ENCODE measurements at regions of chr1 and their contacts with region 1.

Region 1: DNA sequence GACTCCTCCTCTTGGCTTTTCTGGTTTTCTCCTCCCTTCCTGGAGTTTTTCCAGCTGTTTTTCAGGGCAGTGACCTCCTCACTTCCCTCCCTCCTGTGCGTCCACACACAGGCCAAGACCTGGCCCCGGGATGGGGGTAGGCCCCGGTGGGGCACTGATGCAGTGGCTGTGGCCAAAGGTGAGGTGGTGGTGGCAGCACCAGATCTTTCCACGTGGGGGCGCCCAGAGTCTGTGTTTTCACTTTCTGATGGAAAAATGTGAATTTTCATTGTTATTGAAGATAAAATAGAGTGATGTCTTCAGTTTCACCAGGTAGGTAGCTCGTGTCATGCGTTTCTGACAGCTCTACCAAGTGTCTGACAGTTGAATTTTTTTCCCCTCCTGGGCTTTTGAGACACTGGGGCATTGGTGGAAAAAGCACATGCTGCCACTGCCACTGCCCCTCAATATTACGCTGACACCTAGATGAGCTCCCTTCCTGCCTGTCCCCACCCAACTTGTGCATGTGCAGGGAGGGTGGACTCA is 39.9 kb upstream of the MAGOH start:
- DNase-seq: peak; percentile 49
- ATAC-seq: peak; percentile 50 to 55

Region 2: DNA sequence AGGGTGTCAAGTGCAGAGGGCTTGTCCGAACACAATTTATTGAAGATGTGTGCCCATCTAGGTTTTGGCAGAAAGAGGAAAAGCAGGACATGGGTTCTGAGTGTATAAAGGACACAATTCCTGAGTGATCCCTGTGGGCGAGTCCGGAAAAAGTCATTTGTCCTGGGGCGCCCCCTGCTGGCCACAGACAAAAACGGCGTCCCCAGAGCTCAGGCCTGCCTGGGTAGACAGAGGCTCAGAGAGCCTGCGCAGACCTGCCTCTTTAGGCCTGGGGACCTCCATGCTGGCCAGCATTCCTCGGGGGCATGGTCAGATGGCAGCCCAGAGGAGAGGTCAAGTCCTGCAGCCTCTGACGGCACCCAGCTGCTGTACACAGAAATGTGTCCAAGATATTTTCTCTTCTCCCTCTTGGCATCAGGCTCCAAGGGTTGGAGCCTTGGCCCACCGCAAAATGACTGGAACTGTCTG is 115.1 kb after region 1 on chr1:
- intact Hi-C with region 1: loop called (anchors 1 to 2 kb)
- DNase-seq: peak; percentile 75
- ATAC-seq: peak; percentile 86 to 89

Region 3: GRCh38 chr1:53754484-53755312 is 476.4 kb after region 1 on chr1:
- intact Hi-C with region 1: loop called in 1 of 2 experiments (anchors 10 kb)
- DNase-seq: peak; percentile 34
- ATAC-seq: peak in 1 of 2 donors; percentile 39